Left ventricle myocardium inferior (tissue), 1 donor: ENCODE measurements at regions of chr2 and their contacts with region 1.

Region 1: DNA sequence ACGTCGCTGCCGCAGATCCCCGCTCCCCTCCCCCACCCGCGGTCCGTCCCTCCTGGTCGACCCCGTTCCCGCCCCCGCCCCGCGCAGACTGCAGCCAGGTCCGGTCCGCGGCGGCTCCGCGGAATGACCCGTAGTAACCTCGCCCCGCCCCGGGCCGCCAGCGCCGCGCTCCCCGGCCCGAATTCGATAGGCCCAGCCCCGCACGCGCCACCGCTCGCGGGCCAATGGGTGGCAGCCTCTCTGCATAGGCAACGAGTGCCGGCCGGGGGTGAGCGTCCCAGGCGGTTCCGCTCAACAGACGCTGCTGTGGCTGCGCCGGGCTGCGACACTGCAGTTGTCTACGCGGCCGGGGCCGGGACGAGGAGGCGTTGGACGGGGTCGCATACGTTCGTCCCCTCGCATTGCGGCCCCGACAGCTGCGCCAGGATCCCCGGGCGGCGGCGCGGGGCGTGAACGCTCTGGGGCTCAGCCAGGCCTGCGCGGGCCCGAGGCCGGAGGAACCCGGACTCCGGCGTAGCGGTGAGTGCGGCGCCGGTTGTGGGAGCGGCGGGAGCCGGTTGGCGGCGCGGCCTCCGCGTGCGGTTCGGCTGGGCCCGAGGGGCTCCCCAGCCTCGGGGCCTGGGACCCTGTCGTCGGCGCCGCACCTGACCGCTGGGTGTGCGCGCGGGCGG is at the start of gene ACSL3:
- DNase-seq: peak; percentile 99
- H3K4me3 ChIP-seq: peak within 1 kb of the TSS; percentile 89
- H3K27ac ChIP-seq: peak within 1 kb of the TSS; percentile 98
- H3K4me1 ChIP-seq: peaks cover 66% of the 10 kb centered on the region
- H3K27me3 ChIP-seq: no peaks in the 10 kb centered on the region
- CTCF ChIP-seq: no peak
- total RNA-seq, gene ACSL3: 50.1 TPM

Region 2: GRCh38 chr2:222707689-222708525 is 153.0 kb before region 1 on chr2:
- intact Hi-C with region 1: loop called (anchors 5 kb)
- DNase-seq: peak; percentile 81
- H3K4me3 ChIP-seq: no peak overlapping the region
- H3K27ac ChIP-seq: no peak overlapping the region
- H3K4me1 ChIP-seq: peaks cover 21% of the 10 kb centered on the region
- H3K27me3 ChIP-seq: no peaks in the 10 kb centered on the region
- CTCF ChIP-seq: peak; percentile 95

Region 3: DNA sequence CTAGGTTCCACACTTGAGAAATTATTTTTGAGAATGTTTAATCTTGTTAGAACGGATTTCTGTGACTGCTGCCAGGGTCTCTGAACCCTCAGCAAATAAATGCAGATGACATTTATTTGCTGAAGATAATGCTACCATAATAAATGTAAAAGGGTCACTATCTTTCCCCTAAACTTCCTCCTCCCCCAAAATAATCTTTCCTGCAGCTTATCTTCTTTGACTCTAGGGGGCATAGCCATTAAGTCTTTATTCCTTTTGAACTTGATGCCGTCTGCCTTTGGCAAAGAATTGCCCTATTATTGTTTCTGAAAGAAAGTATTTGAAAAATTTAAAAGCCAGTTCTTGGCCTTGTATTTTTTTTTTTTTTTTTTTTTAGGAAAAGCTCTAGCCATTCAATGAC is 63.6 kb before region 1 on chr2:
- intact Hi-C with region 1: loop called (anchors 10 kb)
- DNase-seq: no peak
- H3K4me3 ChIP-seq: no peak overlapping the region
- H3K27ac ChIP-seq: peak overlapping the region; percentile 71
- H3K4me1 ChIP-seq: peaks cover 57% of the 10 kb centered on the region
- H3K27me3 ChIP-seq: no peaks in the 10 kb centered on the region
- CTCF ChIP-seq: peak; percentile 53

Region 4: GRCh38 chr2:222903234-222904220 is 42.7 kb after region 1 on chr2:
- intact Hi-C with region 1: loop called (anchors 5 kb)
- DNase-seq: no peak
- H3K4me3 ChIP-seq: no peak overlapping the region
- H3K27ac ChIP-seq: peak overlapping the region; percentile 9
- H3K4me1 ChIP-seq: peaks cover 75% of the 10 kb centered on the region
- H3K27me3 ChIP-seq: no peaks in the 10 kb centered on the region
- CTCF ChIP-seq: peak; percentile 81